Heart left ventricle (tissue), 16 donors: ENCODE measurements at regions of chr14 and their contacts with region 1.

Region 1: DNA sequence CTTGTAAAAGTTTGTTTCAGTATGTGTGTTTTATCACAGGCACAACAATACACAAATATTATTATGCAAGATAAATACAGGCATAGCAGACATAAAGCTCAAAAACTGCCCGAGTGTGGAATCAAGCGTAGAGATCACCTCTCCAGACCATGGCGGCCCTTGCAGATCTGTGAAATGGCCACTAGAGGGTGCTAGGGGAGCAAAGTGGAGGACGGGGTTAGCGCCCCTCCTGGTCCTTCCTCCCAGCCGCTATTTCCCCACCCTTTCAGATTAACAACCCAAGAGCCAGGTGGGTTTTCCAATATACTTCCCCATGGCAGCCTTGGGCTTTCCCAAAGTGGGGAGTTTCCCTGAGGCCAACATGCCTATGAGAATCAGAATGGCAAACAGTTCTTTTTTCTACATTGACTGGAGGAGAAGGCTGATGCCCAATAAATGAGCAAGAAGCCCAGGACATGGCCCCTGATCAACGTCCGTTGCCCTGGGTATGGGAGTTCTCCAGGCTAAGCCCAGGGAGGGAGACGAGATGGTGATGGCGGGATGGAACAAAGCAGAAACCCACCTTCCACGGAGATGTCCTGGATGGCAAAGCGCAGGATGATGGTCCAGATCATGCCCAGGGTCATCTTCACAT is 67.4 kb downstream of the ACTN1 start:
- DNase-seq: peak; percentile 66 to 79 (median 75)
- ATAC-seq: peak; percentile 80 to 90 (median 88)
- H3K4me3 ChIP-seq: no peak overlapping the region
- H3K27ac ChIP-seq: peak overlapping the region in 3 of 12 donors; percentile 1 to 98 (median 10)
- H3K4me1 ChIP-seq: peaks cover 0 to 29% (median 8%) of the 10 kb centered on the region in 12 donors
- H3K27me3 ChIP-seq: no peaks in the 10 kb centered on the region
- CTCF ChIP-seq: peak; percentile 97 to 99 (median 99)
- POLR2A ChIP-seq: no peak

Region 2: GRCh38 chr14:69002069-69002468 is 90.4 kb after region 1 on chr14:
- intact Hi-C with region 1: loop called in 9 of 10 experiments (anchors 1 to 5 kb)
- DNase-seq: peak in 4 of 5 donors; percentile 46 to 56 (median 52)
- ATAC-seq: peak; percentile 82 to 94 (median 85)
- H3K4me3 ChIP-seq: no peak overlapping the region
- H3K27ac ChIP-seq: no peak overlapping the region
- H3K4me1 ChIP-seq: peaks cover 0 to 11% (median 2%) of the 10 kb centered on the region in 12 donors
- H3K27me3 ChIP-seq: no peaks in the 10 kb centered on the region
- CTCF ChIP-seq: peak; percentile 32 to 66 (median 50)
- POLR2A ChIP-seq: no peak

Region 3: DNA sequence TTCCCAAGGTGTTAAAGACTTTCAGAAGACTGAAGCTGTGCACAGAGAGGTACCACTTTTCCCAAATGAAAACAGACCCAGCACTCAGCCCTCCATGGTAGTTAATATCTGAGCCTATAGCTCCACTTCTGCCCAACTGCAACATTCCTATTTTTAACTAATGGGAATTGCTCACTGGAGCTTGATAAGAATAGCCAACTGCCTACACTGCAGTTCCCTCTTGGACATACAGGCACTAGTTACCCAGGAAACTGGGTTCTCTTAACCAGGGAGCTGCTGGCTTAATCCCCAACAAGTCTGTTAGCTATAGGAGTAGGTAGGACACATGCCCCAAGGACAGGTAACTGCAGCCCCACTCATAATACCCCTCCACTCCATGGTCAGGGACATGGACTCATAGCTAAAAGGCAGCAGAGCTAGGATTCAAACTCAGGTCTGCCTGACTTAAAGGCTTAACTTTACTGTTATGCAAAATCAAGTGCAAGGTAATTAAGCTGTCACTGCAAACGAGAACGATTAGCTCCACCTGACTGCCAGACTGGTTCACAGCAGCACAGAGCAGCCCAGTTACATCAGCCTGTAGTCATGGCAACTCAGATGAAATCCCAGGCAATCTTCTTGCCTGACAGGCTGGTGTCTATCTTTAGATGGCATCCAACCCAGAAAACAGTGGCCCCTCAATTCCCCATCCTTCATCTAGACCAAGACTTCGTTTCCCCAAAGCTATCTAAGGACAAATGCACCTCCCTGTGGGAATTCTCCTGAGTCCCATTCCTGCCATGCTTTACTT is 144.5 kb after region 1 on chr14:
- intact Hi-C with region 1: loop called in 1 of 10 experiments (anchors 5 kb)
- DNase-seq: no peak
- ATAC-seq: peak in 3 of 4 donors; percentile 41 to 56 (median 44)
- H3K4me3 ChIP-seq: no peak overlapping the region
- H3K27ac ChIP-seq: peak overlapping the region in 2 of 12 donors; percentile 9 to 17
- H3K4me1 ChIP-seq: peaks cover 2 to 48% (median 24%) of the 10 kb centered on the region in 12 donors
- H3K27me3 ChIP-seq: no peaks in the 10 kb centered on the region
- CTCF ChIP-seq: peak in 5 of 12 donors; percentile 8 to 27 (median 16)
- POLR2A ChIP-seq: no peak

Region 4: GRCh38 chr14:69090187-69090789 is 178.6 kb after region 1 on chr14:
- intact Hi-C with region 1: loop called in 9 of 10 experiments (anchors 5 kb)
- DNase-seq: peak in 1 of 5 donors; percentile 24
- ATAC-seq: peak in 3 of 4 donors; percentile 53 to 68 (median 58)
- H3K4me3 ChIP-seq: no peak overlapping the region
- H3K27ac ChIP-seq: peak overlapping the region in 1 of 12 donors; percentile 82
- H3K4me1 ChIP-seq: peaks cover 0 to 25% (median 10%) of the 10 kb centered on the region in 12 donors
- H3K27me3 ChIP-seq: no peaks in the 10 kb centered on the region
- CTCF ChIP-seq: peak; percentile 40 to 73 (median 58)
- POLR2A ChIP-seq: no peak

Region 5: DNA sequence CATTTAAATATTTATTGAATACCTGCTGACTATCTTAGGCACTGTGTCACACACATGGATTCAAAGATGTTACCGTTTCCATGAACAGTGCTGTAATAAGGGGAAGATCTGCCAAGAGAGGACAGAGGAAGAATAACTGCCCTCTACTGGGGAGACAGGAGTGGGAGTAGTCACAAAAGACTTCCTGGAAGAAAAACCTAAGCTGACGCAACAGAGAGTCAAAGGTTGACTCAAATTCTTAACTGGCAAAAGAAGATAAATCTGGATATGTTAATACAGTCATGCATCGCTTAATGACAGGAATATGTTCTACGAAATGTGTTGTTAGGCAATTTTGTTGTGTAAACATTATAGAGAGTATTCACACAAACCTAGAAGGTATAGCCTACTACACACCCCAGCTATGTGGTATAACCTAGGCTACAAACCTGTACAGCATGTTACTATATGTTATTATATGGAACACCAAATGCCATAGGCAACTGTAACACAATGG is 189.7 kb after region 1 on chr14:
- intact Hi-C with region 1: loop called in 7 of 10 experiments (anchors 5 kb)
- DNase-seq: peak in 1 of 5 donors; percentile 27
- ATAC-seq: peak in 3 of 4 donors; percentile 87 to 91 (median 90)
- H3K4me3 ChIP-seq: no peak overlapping the region
- H3K27ac ChIP-seq: peak overlapping the region in 2 of 12 donors; percentile 9 to 34
- H3K4me1 ChIP-seq: peaks cover 0 to 10% (median 2%) of the 10 kb centered on the region in 12 donors
- H3K27me3 ChIP-seq: no peaks in the 10 kb centered on the region
- CTCF ChIP-seq: peak; percentile 30 to 69 (median 56)
- POLR2A ChIP-seq: no peak

Region 6: DNA sequence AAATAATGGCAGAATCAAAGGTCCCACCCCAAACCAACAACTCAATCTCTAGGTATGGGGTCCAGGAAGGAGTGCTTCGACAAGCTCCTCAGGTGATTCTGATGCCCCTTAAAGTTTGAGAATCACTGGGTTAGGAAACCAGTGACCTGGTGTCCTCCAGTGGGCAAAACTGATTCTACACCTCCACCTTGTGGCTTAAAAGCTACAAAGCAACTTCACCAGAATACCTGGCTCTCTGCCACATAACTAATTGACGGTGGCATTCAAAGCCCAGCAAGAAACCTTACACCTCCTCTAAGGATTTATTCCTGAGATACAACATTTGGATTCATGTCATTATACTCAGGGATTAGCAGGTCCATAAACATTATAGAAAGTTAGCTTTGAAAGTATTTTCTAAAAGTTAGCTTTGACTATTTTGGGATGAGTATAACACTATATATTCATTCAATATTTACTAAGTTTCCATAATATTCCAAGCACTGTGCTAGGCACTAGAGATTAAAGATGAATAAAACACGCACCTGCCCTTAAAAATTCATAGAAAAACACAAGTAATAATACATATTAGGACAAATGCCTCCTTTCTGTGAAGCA is 195.8 kb after region 1 on chr14:
- intact Hi-C with region 1: loop called in 5 of 10 experiments (anchors 5 kb)
- DNase-seq: peak in 2 of 5 donors; percentile 36 to 37
- ATAC-seq: peak; percentile 44 to 78 (median 68)
- H3K4me3 ChIP-seq: no peak overlapping the region
- H3K27ac ChIP-seq: no peak overlapping the region
- H3K4me1 ChIP-seq: peaks cover 0 to 3% (median 0%) of the 10 kb centered on the region in 12 donors
- H3K27me3 ChIP-seq: no peaks in the 10 kb centered on the region
- CTCF ChIP-seq: peak; percentile 46 to 77 (median 66)
- POLR2A ChIP-seq: no peak